Naive thymus-derived CD4-positive, alpha-beta T cell (primary cell): ENCODE measurements at regions of chr3 and their contacts with region 1.

Region 1: GRCh38 chr3:101635954-101636798 is 40.8 kb downstream of the ZBTB11 start:
- DNase-seq: peak; percentile 31 to 72 (median 65)
- ATAC-seq: peak; percentile 92
- H3K4me3 ChIP-seq: no peak overlapping the region
- H3K4me3 Mint-ChIP-seq: no peak overlapping the region
- H3K27ac ChIP-seq: no peak overlapping the region
- H3K27ac Mint-ChIP-seq: no peak overlapping the region
- H3K4me1 ChIP-seq: no peaks in the 10 kb centered on the region
- H3K4me1 Mint-ChIP-seq: peaks cover 0 to 5% (median 4%) of the 10 kb centered on the region in 7 donors
- H3K27me3 ChIP-seq: no peaks in the 10 kb centered on the region
- H3K27me3 Mint-ChIP-seq: no peaks in the 10 kb centered on the region

Region 2: DNA sequence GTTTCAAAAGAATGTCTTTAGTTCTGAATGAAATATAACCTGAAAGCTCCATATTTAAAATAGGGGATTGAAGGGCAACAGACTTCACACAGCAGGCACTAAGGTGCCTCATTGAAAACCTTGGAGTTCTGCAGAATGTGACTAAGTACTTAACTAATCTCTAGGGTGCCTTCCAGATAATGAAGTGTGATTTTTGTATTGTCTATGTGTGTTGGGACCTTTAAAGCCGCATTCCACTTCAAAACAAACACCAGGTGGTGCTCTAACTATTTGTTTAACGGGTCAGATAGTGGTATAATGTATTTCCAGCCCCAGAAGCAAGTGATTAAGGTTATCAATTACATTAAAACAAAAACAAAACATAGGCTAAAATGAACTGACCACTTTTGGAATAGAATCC is 898.8 kb before region 1 on chr3:
- CTCF ChIA-PET with region 1: no interaction called
- POLR2A ChIA-PET with region 1: no interaction called
- intact Hi-C with region 1: loop called in 1 of 2 experiments (anchors 1 kb)
- DNase-seq: peak in 3 of 9 donors; percentile 1 to 11 (median 4)
- ATAC-seq: no peak
- H3K4me3 ChIP-seq: no peak overlapping the region
- H3K4me3 Mint-ChIP-seq: no peak overlapping the region
- H3K27ac ChIP-seq: no peak overlapping the region
- H3K27ac Mint-ChIP-seq: no peak overlapping the region
- H3K4me1 ChIP-seq: no peaks in the 10 kb centered on the region
- H3K4me1 Mint-ChIP-seq: peaks cover 4 to 16% (median 11%) of the 10 kb centered on the region in 7 donors
- H3K27me3 ChIP-seq: no peaks in the 10 kb centered on the region
- H3K27me3 Mint-ChIP-seq: no peaks in the 10 kb centered on the region

Region 3: DNA sequence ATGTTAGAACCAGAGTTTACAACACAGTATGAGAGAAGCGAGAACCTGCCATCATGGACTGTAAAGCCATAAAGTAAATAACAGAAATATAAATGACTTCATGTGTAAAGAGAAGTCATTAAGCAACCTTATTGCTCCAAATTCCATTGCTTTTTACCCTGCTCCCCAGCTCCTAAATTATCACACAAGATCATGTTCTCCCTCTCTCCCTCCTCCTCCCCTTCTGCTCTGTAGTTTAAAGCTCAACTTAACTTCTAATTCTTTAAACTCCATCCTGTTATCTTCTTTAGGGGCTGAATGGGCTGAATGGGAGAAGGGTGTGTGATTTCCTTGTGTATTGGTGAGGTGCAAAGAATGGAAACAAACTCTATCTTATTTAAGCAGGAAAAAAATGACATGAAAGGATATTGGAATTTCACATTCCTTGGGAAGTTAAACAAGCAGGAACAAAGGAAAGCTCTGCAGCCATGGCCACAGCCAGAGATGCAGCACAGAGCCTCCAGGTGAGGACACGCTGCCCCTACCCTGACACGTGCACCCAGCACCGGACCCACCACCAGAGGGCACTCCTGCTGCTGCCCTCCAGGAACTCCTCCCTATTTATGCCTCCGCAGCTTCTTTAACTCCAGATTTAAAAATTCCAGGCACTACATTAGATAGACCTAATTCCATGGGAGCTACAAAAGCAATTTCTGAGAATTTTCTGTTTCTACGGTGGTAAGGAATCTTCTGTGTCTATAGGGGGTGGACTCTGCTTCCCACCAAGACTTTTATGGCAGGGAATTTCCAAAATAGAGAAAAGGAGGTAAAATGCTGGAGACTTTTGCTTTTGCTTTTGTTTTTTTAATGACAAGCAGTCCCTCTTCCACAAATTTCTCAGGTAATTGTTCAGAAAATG is 566.0 kb before region 1 on chr3:
- CTCF ChIA-PET with region 1: interaction called, 3 read pairs
- POLR2A ChIA-PET with region 1: no interaction called
- intact Hi-C with region 1: loop called (anchors 1 kb)
- DNase-seq: peak; percentile 17 to 60 (median 30)
- ATAC-seq: peak; percentile 66
- H3K4me3 ChIP-seq: no peak overlapping the region
- H3K4me3 Mint-ChIP-seq: no peak overlapping the region
- H3K27ac ChIP-seq: no peak overlapping the region
- H3K27ac Mint-ChIP-seq: peak overlapping the region in 1 of 9 donors; percentile 39
- H3K4me1 ChIP-seq: peaks cover 0 to 4% of the 10 kb centered on the region in 2 donors
- H3K4me1 Mint-ChIP-seq: peaks cover 0 to 4% (median 0%) of the 10 kb centered on the region in 7 donors
- H3K27me3 ChIP-seq: no peaks in the 10 kb centered on the region
- H3K27me3 Mint-ChIP-seq: peaks cover 13 to 25% (median 20%) of the 10 kb centered on the region in 5 donors

Region 4: DNA sequence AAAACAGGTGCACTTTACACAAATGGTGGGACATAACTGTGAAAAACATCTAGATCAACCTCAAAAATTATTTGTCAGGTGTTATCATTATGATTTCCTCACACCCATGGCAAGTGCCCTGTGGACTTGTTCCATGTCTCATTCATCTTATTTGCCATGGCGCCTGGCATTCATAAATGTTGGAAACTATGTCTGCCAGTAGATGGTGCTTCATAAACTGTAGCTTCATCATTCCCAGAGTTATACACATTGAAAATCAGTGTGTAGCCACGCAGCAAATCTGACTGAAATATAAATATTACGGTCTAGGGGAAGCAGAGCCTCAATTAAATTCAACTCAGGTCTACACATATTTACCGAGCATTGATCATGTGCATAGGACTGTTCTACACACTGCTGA is 406.5 kb before region 1 on chr3:
- CTCF ChIA-PET with region 1: interaction called, 3 read pairs
- POLR2A ChIA-PET with region 1: no interaction called
- intact Hi-C with region 1: loop called in 1 of 2 experiments (anchors 1 kb)
- DNase-seq: no peak
- ATAC-seq: no peak
- H3K4me3 ChIP-seq: no peak overlapping the region
- H3K4me3 Mint-ChIP-seq: no peak overlapping the region
- H3K27ac ChIP-seq: no peak overlapping the region
- H3K27ac Mint-ChIP-seq: no peak overlapping the region
- H3K4me1 ChIP-seq: no peaks in the 10 kb centered on the region
- H3K4me1 Mint-ChIP-seq: no peaks in the 10 kb centered on the region
- H3K27me3 ChIP-seq: no peaks in the 10 kb centered on the region
- H3K27me3 Mint-ChIP-seq: no peaks in the 10 kb centered on the region

Region 5: GRCh38 chr3:101381809-101382208 is 254.4 kb before region 1 on chr3:
- CTCF ChIA-PET with region 1: no interaction called
- POLR2A ChIA-PET with region 1: no interaction called
- intact Hi-C with region 1: loop called in 1 of 2 experiments (anchors 5 kb)
- DNase-seq: peak in 6 of 9 donors; percentile 10 to 42 (median 24)
- ATAC-seq: peak; percentile 69
- H3K4me3 ChIP-seq: no peak overlapping the region
- H3K4me3 Mint-ChIP-seq: no peak overlapping the region
- H3K27ac ChIP-seq: no peak overlapping the region
- H3K27ac Mint-ChIP-seq: peak overlapping the region in 1 of 9 donors; percentile 40
- H3K4me1 ChIP-seq: no peaks in the 10 kb centered on the region
- H3K4me1 Mint-ChIP-seq: peaks cover 31 to 89% (median 73%) of the 10 kb centered on the region in 7 donors
- H3K27me3 ChIP-seq: no peaks in the 10 kb centered on the region
- H3K27me3 Mint-ChIP-seq: no peaks in the 10 kb centered on the region

Region 6: DNA sequence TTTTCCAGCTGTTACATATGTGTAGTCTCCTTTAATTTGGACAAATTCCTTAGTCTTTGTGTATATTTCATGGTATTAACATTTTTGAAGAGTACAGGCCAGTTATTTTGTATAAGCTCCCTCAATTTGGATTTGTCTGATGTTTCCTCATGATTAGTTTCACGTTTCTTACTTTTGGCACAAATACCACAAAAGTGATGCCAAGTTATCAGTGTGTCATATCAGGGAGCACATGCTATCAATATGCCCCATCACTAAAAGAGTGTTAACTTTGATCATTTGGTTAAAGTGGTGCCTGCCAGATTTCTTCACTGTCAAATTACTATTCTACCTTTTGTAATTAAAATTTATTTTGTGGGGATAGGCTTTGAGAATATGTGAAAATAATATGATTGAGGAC is 47.6 kb before region 1 on chr3:
- CTCF ChIA-PET with region 1: no interaction called
- POLR2A ChIA-PET with region 1: no interaction called
- intact Hi-C with region 1: loop called in 1 of 2 experiments (anchors 5 kb)
- DNase-seq: no peak
- ATAC-seq: no peak
- H3K4me3 ChIP-seq: no peak overlapping the region
- H3K4me3 Mint-ChIP-seq: no peak overlapping the region
- H3K27ac ChIP-seq: no peak overlapping the region
- H3K27ac Mint-ChIP-seq: peak overlapping the region in 5 of 9 donors; percentile 5 to 76 (median 66)
- H3K4me1 ChIP-seq: no peaks in the 10 kb centered on the region
- H3K4me1 Mint-ChIP-seq: peaks cover 15 to 55% (median 40%) of the 10 kb centered on the region in 7 donors
- H3K27me3 ChIP-seq: no peaks in the 10 kb centered on the region
- H3K27me3 Mint-ChIP-seq: no peaks in the 10 kb centered on the region

Region 7: DNA sequence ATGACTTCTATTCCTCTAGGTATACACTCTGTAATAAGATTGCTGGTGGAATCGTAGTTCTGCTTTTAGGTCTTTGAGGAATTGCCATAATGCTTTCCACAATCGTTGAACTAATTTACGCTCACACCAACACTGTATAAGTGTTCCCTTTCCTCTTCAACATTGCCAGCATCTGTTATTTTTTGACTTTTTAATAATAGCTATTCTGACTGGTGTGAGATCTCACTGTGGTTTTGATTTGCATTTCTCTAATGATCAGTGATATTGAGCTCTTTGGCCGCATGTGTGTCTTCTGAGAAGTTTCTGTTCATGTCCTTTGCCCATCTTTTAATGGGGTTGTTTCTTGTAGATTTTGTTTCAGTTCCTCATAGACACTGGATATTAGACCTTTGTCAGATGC is 155.6 kb after region 1 on chr3:
- CTCF ChIA-PET with region 1: no interaction called
- POLR2A ChIA-PET with region 1: no interaction called
- intact Hi-C with region 1: no loop called
- DNase-seq: no peak
- ATAC-seq: no peak
- H3K4me3 ChIP-seq: no peak overlapping the region
- H3K4me3 Mint-ChIP-seq: peak overlapping the region in 6 of 10 donors; percentile 38 to 71 (median 60)
- H3K27ac ChIP-seq: no peak overlapping the region
- H3K27ac Mint-ChIP-seq: peak overlapping the region in 8 of 9 donors; percentile 67 to 88 (median 82)
- H3K4me1 ChIP-seq: peaks cover 0 to 35% of the 10 kb centered on the region in 2 donors
- H3K4me1 Mint-ChIP-seq: peaks cover 34 to 97% (median 89%) of the 10 kb centered on the region in 7 donors
- H3K27me3 ChIP-seq: no peaks in the 10 kb centered on the region
- H3K27me3 Mint-ChIP-seq: no peaks in the 10 kb centered on the region